ENCODE measurements at regions of chr12 and their contacts with region 1.

Region 1: GRCh38 chr12:55738123-55739024 is 4.5 kb upstream of the GDF11 start:
- DNase-seq: peak; percentile 87
- H3K4me3 Mint-ChIP-seq: peak overlapping the region; percentile 88
- H3K27ac Mint-ChIP-seq: peak overlapping the region; percentile 84
- H3K4me1 Mint-ChIP-seq: peaks cover 33% of the 10 kb centered on the region
- H3K27me3 Mint-ChIP-seq: peaks cover 11% of the 10 kb centered on the region

Region 2: DNA sequence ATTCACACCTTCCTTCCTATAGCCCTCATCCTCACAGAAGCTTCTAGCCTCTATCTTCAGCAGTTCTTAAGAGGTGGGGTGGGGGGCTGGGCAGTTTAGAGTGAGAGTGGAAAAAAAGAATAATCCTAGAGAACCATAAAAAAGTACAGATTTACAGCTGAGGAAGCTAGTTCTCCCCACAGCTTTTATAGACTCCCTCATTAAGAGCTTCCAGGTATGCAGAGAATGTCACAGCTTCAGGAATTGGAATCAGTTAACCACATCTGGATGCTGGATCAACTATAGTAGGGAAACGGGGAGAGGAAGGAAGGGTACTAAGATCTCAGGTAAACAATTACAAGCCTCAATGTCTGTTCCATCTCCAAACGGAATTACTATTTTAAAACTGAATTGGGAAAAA is 16.9 kb after region 1 on chr12:
- CTCF ChIA-PET with region 1: interaction called, 18 read pairs
- POLR2A ChIA-PET with region 1: interaction called, 12 read pairs
- DNase-seq: no peak
- H3K4me3 Mint-ChIP-seq: no peak overlapping the region
- H3K27ac Mint-ChIP-seq: no peak overlapping the region
- H3K4me1 Mint-ChIP-seq: peaks cover 2% of the 10 kb centered on the region
- H3K27me3 Mint-ChIP-seq: no peaks in the 10 kb centered on the region

Region 3: DNA sequence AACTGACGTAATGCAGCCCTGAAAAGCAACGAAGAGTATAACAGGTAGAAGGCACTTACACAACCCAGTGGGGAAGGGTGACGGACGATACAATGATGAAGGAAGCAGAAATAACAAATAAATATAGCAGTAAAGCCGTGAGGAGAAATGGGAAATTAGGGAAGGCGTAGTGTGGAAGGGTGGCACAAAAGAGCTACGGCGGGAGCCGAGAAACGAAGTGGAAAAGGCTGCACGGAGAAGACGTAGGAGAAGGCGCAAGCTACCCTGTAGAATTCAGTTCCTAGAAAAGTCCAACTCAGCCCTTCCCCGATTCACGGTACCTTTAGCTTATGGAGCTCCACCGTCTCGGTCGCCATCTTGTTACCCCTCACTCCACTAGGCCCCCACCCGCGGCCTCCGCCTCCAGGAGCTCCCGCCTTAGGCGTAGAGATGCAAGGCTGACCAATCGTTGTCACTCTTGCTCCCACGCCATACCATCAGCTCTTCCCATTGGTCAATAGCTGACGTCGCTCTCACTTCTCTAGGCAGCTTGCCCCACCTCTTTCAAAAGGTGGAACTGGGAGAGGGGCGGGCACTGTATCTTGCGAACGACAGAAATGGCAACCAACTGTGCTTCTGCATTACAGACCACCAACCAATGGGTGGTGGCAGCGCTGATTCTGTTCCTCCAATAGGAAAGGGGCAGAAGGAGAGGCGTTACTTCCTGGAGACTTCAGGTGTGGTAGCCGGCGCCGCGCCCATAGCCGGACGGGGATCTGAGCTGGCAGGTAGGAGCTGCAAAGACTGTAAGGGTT is 79.2 kb after region 1 on chr12 and contains the starts of genes ORMDL2 and SARNP:
- CTCF ChIA-PET with region 1: interaction called, 47 read pairs
- POLR2A ChIA-PET with region 1: interaction called, 20 read pairs
- DNase-seq: peak; percentile 98
- H3K4me3 Mint-ChIP-seq: no peak within 1 kb of the TSS
- H3K27ac Mint-ChIP-seq: no peak within 1 kb of the TSS
- H3K4me1 Mint-ChIP-seq: peaks cover 47% of the 10 kb centered on the region
- H3K27me3 Mint-ChIP-seq: no peaks in the 10 kb centered on the region
- total RNA-seq, gene ORMDL2: 56.3 to 60.2 TPM
- total RNA-seq, gene SARNP: 88.3 to 88.6 TPM

Region 4: GRCh38 chr12:55839345-55840140 is 101.2 kb after region 1 on chr12:
- CTCF ChIA-PET with region 1: no interaction called
- POLR2A ChIA-PET with region 1: no interaction called
- DNase-seq: no peak
- H3K4me3 Mint-ChIP-seq: no peak overlapping the region
- H3K27ac Mint-ChIP-seq: no peak overlapping the region
- H3K4me1 Mint-ChIP-seq: no peaks in the 10 kb centered on the region
- H3K27me3 Mint-ChIP-seq: peaks cover 3% of the 10 kb centered on the region

Region 5: DNA sequence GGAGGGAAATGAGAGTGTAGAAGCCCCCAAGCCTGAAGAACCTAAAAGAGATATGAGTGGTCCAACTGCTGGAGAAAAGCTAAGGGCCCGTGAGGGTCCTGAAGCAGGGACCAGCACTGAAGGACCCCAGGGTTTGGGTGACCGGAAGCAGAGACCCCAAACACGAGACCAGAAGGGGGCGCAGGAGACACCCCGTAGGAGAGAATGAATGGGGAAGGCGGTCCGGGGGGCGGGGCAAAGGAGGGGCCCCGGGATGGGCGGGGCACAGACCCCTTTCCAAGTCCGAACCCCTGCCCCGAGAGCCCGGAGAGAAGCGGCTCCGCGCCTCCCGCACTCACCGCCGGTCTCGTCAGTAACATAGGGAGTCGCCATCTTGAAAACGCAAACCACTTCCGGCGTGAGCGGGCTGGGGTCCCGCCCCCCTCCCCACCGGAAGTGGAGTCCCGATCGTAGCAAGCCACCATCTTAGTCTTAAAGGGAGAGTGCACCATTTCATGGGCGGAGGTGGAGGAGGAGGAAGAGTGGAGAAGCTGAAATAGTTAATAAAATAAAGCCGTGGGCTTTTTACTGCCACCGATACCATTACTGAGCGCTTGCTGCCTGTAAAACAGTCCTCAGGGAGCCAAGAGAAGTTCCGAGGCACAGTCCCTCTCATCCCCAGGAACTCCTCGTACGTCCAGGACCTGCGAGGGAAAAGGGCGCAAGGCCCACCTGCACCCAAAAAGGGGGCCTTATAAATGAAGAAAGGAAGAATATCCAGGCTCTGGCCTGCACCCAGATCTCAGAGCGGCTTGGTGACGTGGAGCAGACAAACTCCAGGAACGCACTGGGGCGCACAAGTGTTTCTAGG is 188.6 kb after region 1 on chr12:
- CTCF ChIA-PET with region 1: interaction called, 14 read pairs
- POLR2A ChIA-PET with region 1: interaction called, 23 read pairs
- DNase-seq: peak; percentile 95
- H3K4me3 Mint-ChIP-seq: peak overlapping the region; percentile 91
- H3K27ac Mint-ChIP-seq: peak overlapping the region; percentile 96
- H3K4me1 Mint-ChIP-seq: peaks cover 53% of the 10 kb centered on the region
- H3K27me3 Mint-ChIP-seq: no peaks in the 10 kb centered on the region

Region 6: DNA sequence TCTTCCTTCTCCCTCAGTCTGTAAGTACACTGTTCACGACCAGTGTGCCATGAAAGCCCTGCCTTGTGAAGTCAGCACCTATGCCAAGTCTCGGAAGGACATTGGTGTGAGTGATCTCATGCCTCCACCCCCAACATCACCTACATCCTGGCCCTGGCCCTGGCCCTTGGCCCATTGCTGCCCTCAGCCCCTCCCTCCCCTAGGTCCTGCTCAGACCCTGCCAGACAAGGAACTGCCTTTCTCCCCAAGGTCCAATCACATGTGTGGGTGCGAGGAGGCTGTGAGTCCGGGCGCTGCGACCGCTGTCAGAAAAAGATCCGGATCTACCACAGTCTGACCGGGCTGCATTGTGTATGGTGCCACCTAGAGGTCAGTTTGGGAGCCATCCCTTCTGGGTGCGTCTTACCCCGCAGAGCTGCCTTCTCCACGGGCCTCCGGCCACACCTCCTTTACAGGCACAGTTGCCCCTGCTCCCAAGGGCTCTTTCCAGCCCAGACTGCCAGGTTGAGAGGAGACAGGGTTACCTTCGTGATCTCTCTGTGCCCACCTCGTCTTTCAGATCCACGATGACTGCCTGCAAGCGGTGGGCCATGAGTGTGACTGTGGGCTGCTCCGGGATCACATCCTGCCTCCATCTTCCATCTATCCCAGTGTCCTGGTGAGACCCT is 201.8 kb after region 1 on chr12:
- CTCF ChIA-PET with region 1: interaction called, 28 read pairs
- POLR2A ChIA-PET with region 1: interaction called, 10 read pairs
- DNase-seq: peak; percentile 86
- H3K4me3 Mint-ChIP-seq: no peak overlapping the region
- H3K27ac Mint-ChIP-seq: peak overlapping the region; percentile 76
- H3K4me1 Mint-ChIP-seq: peaks cover 75% of the 10 kb centered on the region
- H3K27me3 Mint-ChIP-seq: no peaks in the 10 kb centered on the region

Region 7: DNA sequence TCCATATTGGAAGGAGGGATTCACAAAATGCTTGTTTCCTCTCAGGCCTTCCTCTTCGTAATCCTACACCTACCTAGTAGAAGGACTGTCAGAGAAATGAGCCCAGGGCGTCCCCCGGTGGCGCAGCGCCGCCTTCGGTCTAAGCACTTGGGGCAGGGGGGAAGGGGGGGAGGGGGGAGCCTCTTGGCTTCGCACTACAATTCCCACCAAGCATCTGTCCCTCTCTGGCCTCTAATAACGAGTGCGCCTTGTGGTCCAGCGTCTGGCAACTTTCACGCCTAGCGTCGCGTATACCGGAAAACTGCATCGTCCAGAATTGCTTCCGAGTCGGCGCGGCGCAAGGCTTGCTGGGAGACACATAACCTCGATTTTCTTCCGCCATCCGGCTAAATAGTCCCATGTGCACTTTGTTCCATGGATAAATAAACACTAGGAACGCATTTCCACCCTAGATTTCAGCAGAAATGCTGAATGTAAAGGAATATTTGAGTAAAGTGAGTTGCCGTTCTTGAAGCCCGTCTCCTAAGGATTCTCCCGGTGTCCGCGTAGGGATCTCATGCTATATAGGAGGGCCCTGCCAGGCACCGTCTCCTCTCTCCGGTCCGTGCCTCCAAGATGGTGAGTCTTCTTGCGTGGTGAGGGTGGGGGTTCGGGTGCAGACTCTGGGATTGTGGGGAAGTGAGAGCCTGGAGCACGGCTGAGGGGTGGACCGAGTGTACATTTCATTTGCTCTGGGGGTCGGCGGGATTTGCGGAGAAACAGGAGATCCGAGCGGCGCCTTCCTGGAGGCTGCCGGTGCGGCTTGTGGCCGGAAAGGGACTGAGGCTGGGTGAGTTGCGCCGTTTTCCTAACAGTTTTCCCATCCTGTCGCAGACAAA is 303.4 kb after region 1 on chr12 and contains the start of gene RPS26:
- CTCF ChIA-PET with region 1: interaction called, 19 read pairs
- POLR2A ChIA-PET with region 1: interaction called, 10 read pairs
- DNase-seq: peak; percentile 94
- H3K4me3 Mint-ChIP-seq: peak within 1 kb of the TSS; percentile 100
- H3K27ac Mint-ChIP-seq: peak within 1 kb of the TSS; percentile 99
- H3K4me1 Mint-ChIP-seq: peaks cover 60% of the 10 kb centered on the region
- H3K27me3 Mint-ChIP-seq: no peaks in the 10 kb centered on the region
- total RNA-seq, gene RPS26: 30.4 to 35.0 TPM

Measured in activated CD4-positive, alpha-beta memory T cell treated with anti-CD3 and anti-CD28 coated beads, Interleukin-2, amount 10 ng/mL, durations not matched to agents 7 days and 5 days (primary cell).